ENCODE measurements at regions of chr7 and their contacts with region 1.

Region 1: GRCh38 chr7:81618396-81619014 is 151.3 kb downstream of the HGF start:
- DNase-seq: no peak
- ATAC-seq: peak in 1 of 4 donors; percentile 82
- H3K4me3 ChIP-seq: no peak overlapping the region
- H3K27ac ChIP-seq: peak overlapping the region in 1 of 12 donors; percentile 1
- H3K4me1 ChIP-seq: peaks cover 0 to 4% (median 0%) of the 10 kb centered on the region in 12 donors
- H3K27me3 ChIP-seq: no peaks in the 10 kb centered on the region
- CTCF ChIP-seq: no peak
- POLR2A ChIP-seq: no peak

Region 2: GRCh38 chr7:81562581-81562980 is 55.9 kb before region 1 on chr7:
- intact Hi-C with region 1: loop called in 1 of 10 experiments (anchors 5 kb)
- DNase-seq: no peak
- ATAC-seq: no peak
- H3K4me3 ChIP-seq: no peak overlapping the region
- H3K27ac ChIP-seq: no peak overlapping the region
- H3K4me1 ChIP-seq: no peaks in the 10 kb centered on the region
- H3K27me3 ChIP-seq: no peaks in the 10 kb centered on the region
- CTCF ChIP-seq: no peak
- POLR2A ChIP-seq: no peak